GM10248 (cell line): ENCODE measurements at regions of chr17 and their contacts with region 1.

Region 1: DNA sequence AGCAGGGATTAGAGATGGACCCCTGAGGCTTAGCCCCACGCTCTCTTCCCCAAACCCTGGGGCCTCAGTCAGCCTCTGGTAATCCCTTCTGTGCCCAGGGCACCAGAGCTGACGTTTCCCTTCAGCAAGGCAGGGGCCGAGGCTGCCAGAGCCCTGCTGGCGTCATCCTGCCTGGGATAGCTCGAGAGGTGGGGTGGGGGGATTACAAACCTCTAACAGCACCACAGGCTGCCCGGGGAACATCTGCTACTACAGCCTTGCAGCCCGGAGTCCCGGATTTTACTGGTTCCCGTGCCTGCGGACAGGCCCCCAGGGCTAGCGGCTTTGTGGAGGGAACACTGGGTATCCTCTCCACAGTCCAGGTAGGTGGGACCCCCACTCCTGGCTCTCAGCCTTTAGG is at the start of gene AANAT:
- DNase-seq: no peak
- CTCF ChIP-seq: no peak

Region 2: GRCh38 chr17:76452660-76453430 is 14.5 kb before region 1 on chr17 and contains the start of gene UBE2O:
- CTCF ChIA-PET with region 1: interaction called, 43 read pairs
- POLR2A ChIA-PET with region 1: interaction called, 4 read pairs
- DNase-seq: peak; percentile 99
- CTCF ChIP-seq: peak; percentile 63

Region 3: DNA sequence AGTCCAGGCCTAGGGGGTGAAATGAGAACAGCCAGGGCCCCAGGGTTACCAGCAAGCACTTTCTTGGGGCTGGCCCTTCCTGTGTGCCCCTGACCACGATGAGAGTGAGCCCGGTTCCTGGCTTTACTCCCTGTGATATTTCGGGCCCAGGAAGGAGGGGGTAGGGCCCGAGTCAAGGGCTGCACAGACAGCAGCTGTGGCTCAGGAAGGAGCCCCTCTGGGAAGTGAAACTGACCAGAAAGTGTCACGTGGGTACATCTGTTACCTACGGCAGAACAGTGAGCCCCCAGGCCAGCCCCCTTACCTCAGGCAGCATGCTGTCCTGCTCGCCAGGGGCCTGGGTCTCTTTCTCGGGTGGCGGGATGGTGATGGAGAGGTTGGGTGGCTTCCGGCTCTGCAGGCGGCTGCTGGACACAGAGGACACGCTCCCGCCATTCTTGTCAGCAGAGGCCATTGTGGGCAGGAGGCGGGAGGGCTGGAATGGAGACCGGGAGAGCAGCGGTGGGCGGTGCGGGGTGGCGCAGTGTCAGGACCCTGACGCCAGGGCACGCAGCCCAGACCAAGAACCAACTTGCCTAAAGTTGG is 13.8 kb after region 1 on chr17:
- CTCF ChIA-PET with region 1: interaction called, 22 read pairs
- POLR2A ChIA-PET with region 1: no interaction called
- DNase-seq: peak; percentile 81
- CTCF ChIP-seq: no peak

Region 4: GRCh38 chr17:76515274-76515949 is 48.0 kb after region 1 on chr17:
- CTCF ChIA-PET with region 1: interaction called, 20 read pairs
- POLR2A ChIA-PET with region 1: no interaction called
- DNase-seq: peak; percentile 65
- CTCF ChIP-seq: no peak